Left colon (tissue), 2 donors: ENCODE measurements at regions of chr6 and their contacts with region 1.

Region 1: DNA sequence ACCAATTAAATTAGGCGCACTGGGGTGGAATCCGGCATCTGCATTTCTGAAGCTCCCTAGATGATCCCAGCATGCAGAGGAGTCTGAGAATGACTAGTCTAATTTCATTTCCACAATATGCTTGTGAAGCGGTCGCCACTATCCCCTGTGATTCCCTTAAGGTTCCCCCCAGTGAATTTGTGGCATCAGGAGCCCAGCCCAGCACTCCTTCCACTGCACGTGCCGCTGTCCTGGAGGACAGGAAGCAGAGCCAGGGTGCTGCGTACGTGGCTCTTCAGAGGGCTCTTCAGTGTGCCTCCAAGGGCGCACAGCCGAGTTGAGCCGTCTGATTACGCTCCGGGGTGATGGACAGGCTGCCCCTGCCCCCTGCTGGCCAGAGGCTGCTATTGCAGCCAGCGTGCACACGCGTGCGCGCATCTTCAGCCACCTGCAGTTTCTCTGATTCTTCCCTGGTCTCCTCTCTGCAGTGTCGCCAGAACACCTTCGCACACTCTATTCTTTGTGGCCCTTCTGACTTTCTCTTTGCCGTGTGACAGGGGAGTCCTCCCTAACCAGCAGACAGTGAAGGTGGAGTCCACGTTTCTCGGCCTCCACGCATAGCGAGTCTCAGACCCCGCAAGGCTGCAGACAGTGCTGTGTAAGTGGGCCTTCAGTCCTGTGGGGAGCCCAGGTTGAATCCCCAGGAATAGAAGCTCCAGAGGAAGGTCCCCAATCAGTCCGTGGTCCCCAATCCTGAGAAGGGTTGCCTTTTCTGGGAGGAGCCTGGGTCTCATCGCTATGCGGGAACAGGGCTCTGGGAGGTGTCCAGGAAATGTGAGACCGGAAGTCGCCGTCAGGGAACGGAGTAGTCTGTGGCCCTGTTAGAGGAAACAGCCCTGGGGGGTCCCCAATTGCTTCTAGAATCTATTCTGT is 16.5 kb upstream of the NCR2 start:
- DNase-seq: peak; percentile 75 to 82
- ATAC-seq: peak; percentile 82

Region 2: DNA sequence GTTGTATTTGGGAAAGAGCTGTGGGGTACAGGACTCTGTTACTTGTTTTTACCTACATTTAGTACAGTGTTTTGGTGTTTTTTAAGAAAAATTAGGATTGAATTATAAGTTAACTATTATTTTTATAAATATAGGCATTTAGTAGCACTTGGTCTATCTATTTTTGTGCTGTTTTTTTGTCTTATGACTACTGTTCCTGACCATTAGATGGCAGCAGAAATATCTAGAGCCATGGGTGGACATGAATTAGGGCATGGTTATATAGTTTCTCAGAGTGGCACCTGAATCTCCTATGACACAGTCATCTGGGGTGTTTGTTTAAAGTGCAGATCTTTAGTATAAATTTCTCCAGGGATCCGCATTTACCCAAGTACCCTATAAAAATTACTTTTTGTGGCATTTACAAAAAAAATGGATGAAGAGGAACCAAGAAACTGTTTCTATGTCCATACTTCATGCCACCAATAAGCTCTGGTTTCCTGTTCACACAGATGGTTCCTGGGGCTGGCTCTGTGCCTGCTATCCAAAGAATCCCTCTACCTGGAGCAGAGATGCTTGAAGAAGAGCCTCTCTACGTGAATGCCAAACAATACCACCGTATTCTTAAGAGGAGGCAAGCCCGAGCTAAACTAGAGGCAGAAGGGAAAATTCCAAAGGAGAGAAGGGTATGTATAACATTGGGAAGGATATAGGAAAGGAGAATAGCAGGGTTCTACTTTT is 226.3 kb before region 1 on chr6:
- intact Hi-C with region 1: loop called in 1 of 2 experiments (anchors 10 kb)
- DNase-seq: no peak
- ATAC-seq: no peak